Activated T-helper 1 cell treated with anti-CD3 and anti-CD28 coated beads, Interleukin-12 subunit alpha, Interleukin-12 subunit beta, Interleukin-2, Interleukin-4 antibody, amounts not matched to agents 30 ng/mL and 10 ng/mL and 1 ng/mL, durations not matched to agents 14 hours and 24 hours and 36 hours (primary cell): ENCODE measurements at regions of chr9 and their contacts with region 1.

Region 1: DNA sequence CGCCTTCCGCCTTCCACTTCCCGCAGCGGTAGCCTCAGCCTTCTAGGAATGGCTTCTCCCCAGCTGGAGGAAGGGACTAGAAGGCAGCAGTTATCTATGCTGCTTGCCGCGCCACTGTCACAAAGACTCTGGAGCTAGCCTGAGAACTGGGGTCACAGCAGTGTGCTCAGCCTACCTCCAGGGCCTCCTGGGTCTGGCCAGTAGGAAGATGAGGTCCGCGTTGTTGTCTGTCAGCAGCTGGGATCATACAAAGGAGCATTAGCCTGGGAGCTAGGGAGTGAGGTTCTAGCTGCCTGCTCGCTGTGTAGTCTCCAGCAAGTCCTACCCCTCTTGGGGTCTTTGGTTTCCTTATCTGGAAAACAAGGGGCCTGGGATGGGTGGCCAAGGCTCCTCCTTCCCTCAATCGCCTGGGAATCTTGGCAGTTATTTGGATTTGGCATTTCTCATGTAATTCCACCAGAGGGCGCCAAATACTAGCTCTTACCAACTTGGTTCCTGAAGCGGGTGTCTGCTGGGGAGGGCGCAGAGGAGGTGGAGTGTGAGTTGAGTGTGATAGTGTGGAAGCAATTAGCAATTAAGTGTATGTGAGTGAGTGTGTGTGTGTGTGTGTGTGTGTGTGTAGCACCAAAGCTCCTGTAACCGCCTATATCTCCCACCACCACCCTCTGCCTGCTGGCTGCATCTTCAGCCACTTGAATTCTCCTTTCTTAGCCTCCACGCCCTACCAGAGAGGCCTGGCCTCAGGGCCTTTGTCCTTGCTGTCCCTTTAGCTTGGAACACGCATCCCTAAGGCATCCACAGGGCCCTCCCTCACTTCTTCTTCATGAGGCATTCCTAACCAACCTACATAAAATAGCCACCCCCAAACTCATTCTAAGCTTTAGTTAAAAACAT is 97.1 kb downstream of the ENTREP1 start:
- DNase-seq: peak; percentile 31
- H3K4me3 Mint-ChIP-seq: no peak overlapping the region
- H3K27ac Mint-ChIP-seq: no peak overlapping the region
- H3K4me1 Mint-ChIP-seq: no peaks in the 10 kb centered on the region
- H3K27me3 Mint-ChIP-seq: no peaks in the 10 kb centered on the region

Region 2: DNA sequence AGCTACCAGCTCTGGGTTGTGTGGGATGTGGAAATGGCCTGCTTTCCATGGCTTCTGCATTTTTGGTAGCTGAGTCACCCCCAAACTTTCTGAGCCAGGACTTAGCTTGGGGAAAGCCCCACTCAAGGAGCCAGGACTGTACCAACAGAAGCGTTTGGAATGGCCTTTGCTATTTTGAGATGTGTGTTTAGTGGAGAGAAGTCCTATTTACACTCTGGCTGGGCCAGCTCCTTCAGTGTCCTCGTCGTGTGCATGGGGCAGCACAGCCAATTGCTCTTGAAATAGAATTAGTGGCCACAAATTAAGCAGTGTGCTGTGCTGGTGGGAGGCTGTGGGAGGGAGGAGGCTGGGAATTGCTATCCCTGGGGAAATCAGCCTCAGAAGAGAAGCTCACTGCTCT is 45.5 kb before region 1 on chr9:
- intact Hi-C with region 1: no loop called
- DNase-seq: no peak
- H3K4me3 Mint-ChIP-seq: no peak overlapping the region
- H3K27ac Mint-ChIP-seq: no peak overlapping the region
- H3K4me1 Mint-ChIP-seq: no peaks in the 10 kb centered on the region
- H3K27me3 Mint-ChIP-seq: no peaks in the 10 kb centered on the region

Region 3: GRCh38 chr9:69672596-69673310 is 250.6 kb after region 1 on chr9:
- intact Hi-C with region 1: loop called (anchors 2 kb)
- DNase-seq: peak; percentile 65
- H3K4me3 Mint-ChIP-seq: peak overlapping the region; percentile 83
- H3K27ac Mint-ChIP-seq: peak overlapping the region; percentile 15
- H3K4me1 Mint-ChIP-seq: peaks cover 7% of the 10 kb centered on the region
- H3K27me3 Mint-ChIP-seq: peaks cover 42% of the 10 kb centered on the region

Region 4: DNA sequence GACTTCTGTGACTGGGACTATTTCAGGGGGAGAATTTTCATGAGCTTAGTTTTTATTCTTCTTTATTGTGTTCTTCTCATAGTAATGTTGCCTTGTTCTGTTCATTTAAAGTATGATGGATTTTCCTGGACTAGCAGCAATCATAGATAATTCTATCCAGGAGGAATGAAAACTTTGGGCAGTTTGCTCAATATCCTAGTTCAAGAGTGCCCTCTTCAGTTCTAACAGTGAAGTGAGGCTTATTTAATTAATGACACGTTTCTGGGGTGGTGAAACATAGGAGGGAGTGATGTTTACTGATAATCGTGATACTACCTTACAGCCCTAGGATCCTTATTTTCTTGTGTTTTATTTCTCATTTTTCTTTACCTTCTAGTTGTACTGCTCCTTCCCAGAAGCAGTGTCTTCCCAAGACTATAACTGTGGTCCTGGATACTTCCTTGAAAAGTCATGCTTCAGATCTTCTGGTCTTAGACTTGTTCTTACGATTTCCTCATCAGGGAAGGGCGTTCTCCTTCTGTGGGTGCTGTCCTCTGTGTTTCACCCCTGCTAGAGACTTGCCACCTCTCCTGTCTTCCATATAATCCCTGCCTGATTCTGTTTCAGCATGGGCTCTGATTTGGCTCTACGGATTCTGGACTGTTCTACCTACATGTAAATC is 455.8 kb after region 1 on chr9:
- intact Hi-C with region 1: loop called (anchors 1 kb)
- DNase-seq: no peak
- H3K4me3 Mint-ChIP-seq: no peak overlapping the region
- H3K27ac Mint-ChIP-seq: no peak overlapping the region
- H3K4me1 Mint-ChIP-seq: no peaks in the 10 kb centered on the region
- H3K27me3 Mint-ChIP-seq: peaks cover 7% of the 10 kb centered on the region

Region 5: DNA sequence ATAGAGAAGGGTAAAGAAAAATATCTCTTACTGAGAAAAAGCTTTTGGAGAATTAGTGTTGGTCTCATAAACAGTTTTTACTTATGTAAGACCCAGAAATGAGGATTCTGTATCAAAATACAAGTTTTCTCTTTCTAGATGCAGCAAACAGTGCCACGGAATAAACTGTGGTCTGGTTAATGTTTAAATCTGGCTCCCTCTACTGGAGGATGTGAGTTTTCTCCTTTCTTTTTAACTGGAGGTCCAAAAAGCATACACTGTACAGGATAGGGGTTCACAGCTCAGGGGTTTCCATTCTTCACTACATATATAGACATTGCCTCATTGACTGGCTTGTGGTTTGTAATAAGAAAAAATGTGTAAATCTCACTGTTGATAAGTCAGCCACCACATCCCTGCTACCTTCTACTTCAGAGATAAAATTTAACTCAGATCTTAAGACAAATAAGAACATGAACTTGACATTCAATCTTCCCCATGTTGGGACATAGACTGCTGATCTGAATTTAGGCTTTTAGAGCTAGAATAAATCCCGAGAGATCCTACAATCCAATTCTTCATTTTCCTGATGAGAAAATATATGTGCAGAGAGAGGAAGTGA is 497.4 kb after region 1 on chr9:
- intact Hi-C with region 1: loop called (anchors 2 kb)
- DNase-seq: no peak
- H3K4me3 Mint-ChIP-seq: no peak overlapping the region
- H3K27ac Mint-ChIP-seq: no peak overlapping the region
- H3K4me1 Mint-ChIP-seq: no peaks in the 10 kb centered on the region
- H3K27me3 Mint-ChIP-seq: peaks cover 6% of the 10 kb centered on the region

Region 6: GRCh38 chr9:70031141-70031545 is 609.0 kb after region 1 on chr9:
- intact Hi-C with region 1: no loop called
- DNase-seq: no peak
- H3K4me3 Mint-ChIP-seq: no peak overlapping the region
- H3K27ac Mint-ChIP-seq: no peak overlapping the region
- H3K4me1 Mint-ChIP-seq: no peaks in the 10 kb centered on the region
- H3K27me3 Mint-ChIP-seq: peaks cover 4% of the 10 kb centered on the region

Region 7: GRCh38 chr9:70111042-70111602 is 689.0 kb after region 1 on chr9:
- intact Hi-C with region 1: loop called (anchors 5 kb)
- DNase-seq: no peak
- H3K4me3 Mint-ChIP-seq: no peak overlapping the region
- H3K27ac Mint-ChIP-seq: no peak overlapping the region
- H3K4me1 Mint-ChIP-seq: peaks cover 15% of the 10 kb centered on the region
- H3K27me3 Mint-ChIP-seq: peaks cover 7% of the 10 kb centered on the region